ENCODE measurements at regions of chr5 and their contacts with region 1.

Region 1: DNA sequence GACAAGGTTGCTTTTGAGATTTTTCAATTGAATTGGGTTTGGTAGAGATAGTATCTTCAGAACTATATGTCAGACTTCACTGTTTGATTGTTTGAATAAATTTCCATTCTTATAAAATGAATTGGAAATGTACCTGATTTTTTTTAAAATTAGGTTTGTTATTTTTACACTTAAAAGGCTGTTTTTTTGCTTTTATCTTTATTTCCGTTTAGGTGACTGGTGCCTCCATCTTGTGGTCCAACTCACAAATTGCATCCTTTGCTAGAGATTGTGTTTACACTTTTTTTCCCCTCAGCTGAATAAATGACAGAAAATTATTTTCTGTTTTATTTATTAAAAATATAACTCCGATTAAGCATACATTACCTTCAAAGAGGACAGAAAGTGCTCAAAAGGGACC is 15.6 kb downstream of the NDUFAF2 start:
- DNase-seq: no peak
- ATAC-seq: no peak
- H3K4me3 ChIP-seq: no peak overlapping the region
- H3K27ac ChIP-seq: no peak overlapping the region
- H3K4me1 ChIP-seq: peaks cover 0 to 16% (median 5%) of the 10 kb centered on the region in 9 donors
- H3K27me3 ChIP-seq: no peaks in the 10 kb centered on the region
- CTCF ChIP-seq: peak in 7 of 9 donors; percentile 37 to 58 (median 43)

Region 2: GRCh38 chr5:60514152-60514551 is 446.4 kb before region 1 on chr5:
- intact Hi-C with region 1: no loop called
- DNase-seq: no peak
- ATAC-seq: peak in 6 of 8 donors; percentile 33 to 81 (median 61)
- H3K4me3 ChIP-seq: no peak overlapping the region
- H3K27ac ChIP-seq: peak overlapping the region in 3 of 10 donors; percentile 11 to 46 (median 18)
- H3K4me1 ChIP-seq: peaks cover 3 to 23% (median 10%) of the 10 kb centered on the region in 9 donors
- H3K27me3 ChIP-seq: no peaks in the 10 kb centered on the region
- CTCF ChIP-seq: no peak

Region 3: DNA sequence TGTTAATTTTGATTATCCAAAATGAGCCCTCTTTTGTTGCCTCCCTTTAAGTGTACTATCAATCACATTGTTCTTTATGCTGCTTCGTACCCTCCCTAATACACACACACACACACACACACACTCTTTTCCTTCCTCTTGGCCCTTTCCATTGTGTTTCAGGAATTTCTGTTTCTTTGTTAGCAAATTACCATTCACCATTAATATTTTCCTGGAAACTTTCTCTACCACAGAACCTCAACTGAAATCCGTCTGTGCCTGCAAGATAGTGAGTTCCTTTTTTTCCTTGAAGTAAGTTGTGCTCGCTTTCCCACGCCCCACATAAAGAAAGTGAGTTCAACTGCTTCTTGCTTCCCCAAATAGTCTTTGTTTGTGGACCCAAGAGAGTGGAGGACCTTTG is 139.8 kb after region 1 on chr5:
- intact Hi-C with region 1: no loop called
- DNase-seq: no peak
- ATAC-seq: peak in 3 of 8 donors; percentile 20 to 59 (median 46)
- H3K4me3 ChIP-seq: no peak overlapping the region
- H3K27ac ChIP-seq: peak overlapping the region in 4 of 10 donors; percentile 11 to 56 (median 30)
- H3K4me1 ChIP-seq: no peaks in the 10 kb centered on the region
- H3K27me3 ChIP-seq: no peaks in the 10 kb centered on the region
- CTCF ChIP-seq: no peak

Region 4: GRCh38 chr5:61625681-61626621 is 665.4 kb after region 1 on chr5:
- intact Hi-C with region 1: loop called in 1 of 10 experiments (anchors 10 kb)
- DNase-seq: peak; percentile 82 to 84
- ATAC-seq: peak; percentile 93 to 99 (median 97)
- H3K4me3 ChIP-seq: peak overlapping the region; percentile 44 to 73 (median 64)
- H3K27ac ChIP-seq: peak overlapping the region; percentile 73 to 97 (median 90)
- H3K4me1 ChIP-seq: peaks cover 4 to 28% (median 19%) of the 10 kb centered on the region in 9 donors
- H3K27me3 ChIP-seq: peaks cover 0 to 19% (median 0%) of the 10 kb centered on the region in 7 donors
- CTCF ChIP-seq: peak in 2 of 9 donors; percentile 19 to 20

Region 5: GRCh38 chr5:61658592-61659008 is 698.0 kb after region 1 on chr5:
- intact Hi-C with region 1: loop called in 2 of 10 experiments (anchors 5 to 10 kb)
- DNase-seq: peak; percentile 88
- ATAC-seq: peak; percentile 82 to 95 (median 92)
- H3K4me3 ChIP-seq: peak overlapping the region in 6 of 10 donors; percentile 1 to 35 (median 27)
- H3K27ac ChIP-seq: peak overlapping the region in 6 of 10 donors; percentile 25 to 62 (median 40)
- H3K4me1 ChIP-seq: peaks cover 0 to 8% (median 0%) of the 10 kb centered on the region in 9 donors
- H3K27me3 ChIP-seq: no peaks in the 10 kb centered on the region
- CTCF ChIP-seq: peak; percentile 88 to 97 (median 93)

Region 6: GRCh38 chr5:61666064-61666621 is 705.6 kb after region 1 on chr5:
- intact Hi-C with region 1: loop called in 1 of 10 experiments (anchors 10 kb)
- DNase-seq: peak in 1 of 2 donors; percentile 38
- ATAC-seq: peak; percentile 42 to 88 (median 80)
- H3K4me3 ChIP-seq: peak overlapping the region in 4 of 10 donors; percentile 8 to 31 (median 13)
- H3K27ac ChIP-seq: peak overlapping the region in 8 of 10 donors; percentile 12 to 71 (median 54)
- H3K4me1 ChIP-seq: peaks cover 0 to 26% (median 10%) of the 10 kb centered on the region in 9 donors
- H3K27me3 ChIP-seq: no peaks in the 10 kb centered on the region
- CTCF ChIP-seq: no peak

Region 7: GRCh38 chr5:61817472-61818326 is 857.1 kb after region 1 on chr5:
- intact Hi-C with region 1: loop called in 1 of 10 experiments (anchors 10 kb)
- DNase-seq: peak in 1 of 2 donors; percentile 29
- ATAC-seq: peak in 4 of 8 donors; percentile 51 to 74 (median 60)
- H3K4me3 ChIP-seq: no peak overlapping the region
- H3K27ac ChIP-seq: no peak overlapping the region
- H3K4me1 ChIP-seq: peaks cover 0 to 9% (median 0%) of the 10 kb centered on the region in 9 donors
- H3K27me3 ChIP-seq: peaks cover 0 to 37% (median 16%) of the 10 kb centered on the region in 7 donors
- CTCF ChIP-seq: peak in 8 of 9 donors; percentile 21 to 72 (median 62)

Region 8: DNA sequence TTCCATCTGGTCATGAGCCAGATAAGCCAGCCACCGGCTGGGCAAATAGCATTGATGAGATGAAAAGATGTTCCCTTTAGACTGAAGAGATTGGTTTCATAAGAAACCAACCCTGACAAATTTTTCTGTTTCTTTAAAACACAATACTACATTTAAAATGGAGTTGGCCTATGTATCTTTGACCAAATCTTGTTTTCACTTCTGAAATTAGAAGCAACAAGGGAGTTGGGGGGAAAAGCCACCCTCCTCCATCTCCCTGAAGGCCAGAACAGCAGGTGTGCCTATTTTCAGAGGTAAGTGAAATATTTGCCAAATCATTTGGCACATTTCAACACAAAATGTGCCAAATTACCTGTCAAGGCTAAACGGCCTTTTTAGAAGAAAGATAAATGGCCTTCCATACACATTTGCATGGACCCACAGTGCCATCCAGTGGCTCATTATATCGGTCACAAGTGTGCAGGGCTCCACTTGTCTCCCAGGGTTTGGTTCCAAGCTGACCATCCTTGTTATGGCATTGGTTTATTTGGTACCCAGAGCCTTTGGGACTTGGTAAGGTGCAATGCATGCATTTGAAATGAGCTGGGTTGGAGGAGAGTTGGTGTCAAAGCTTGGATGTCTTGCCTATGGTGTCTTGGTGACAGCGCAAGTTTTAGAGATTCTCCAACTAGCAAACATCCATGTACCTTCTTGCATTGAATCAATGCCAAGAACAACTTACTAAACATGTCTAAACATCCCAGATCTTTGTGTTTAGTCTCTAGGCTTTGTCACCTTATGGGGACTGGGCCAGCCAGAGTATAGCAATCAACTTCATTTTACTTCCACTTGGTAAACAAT is 973.4 kb after region 1 on chr5:
- intact Hi-C with region 1: loop called in 4 of 10 experiments (anchors 5 to 10 kb)
- DNase-seq: peak in 1 of 2 donors; percentile 8
- ATAC-seq: peak in 3 of 8 donors; percentile 51 to 67 (median 64)
- H3K4me3 ChIP-seq: no peak overlapping the region
- H3K27ac ChIP-seq: no peak overlapping the region
- H3K4me1 ChIP-seq: no peaks in the 10 kb centered on the region
- H3K27me3 ChIP-seq: no peaks in the 10 kb centered on the region
- CTCF ChIP-seq: peak; percentile 36 to 74 (median 65)